HCT116 (cell line): ENCODE measurements at regions of chr20 and their contacts with region 1.

Region 1: DNA sequence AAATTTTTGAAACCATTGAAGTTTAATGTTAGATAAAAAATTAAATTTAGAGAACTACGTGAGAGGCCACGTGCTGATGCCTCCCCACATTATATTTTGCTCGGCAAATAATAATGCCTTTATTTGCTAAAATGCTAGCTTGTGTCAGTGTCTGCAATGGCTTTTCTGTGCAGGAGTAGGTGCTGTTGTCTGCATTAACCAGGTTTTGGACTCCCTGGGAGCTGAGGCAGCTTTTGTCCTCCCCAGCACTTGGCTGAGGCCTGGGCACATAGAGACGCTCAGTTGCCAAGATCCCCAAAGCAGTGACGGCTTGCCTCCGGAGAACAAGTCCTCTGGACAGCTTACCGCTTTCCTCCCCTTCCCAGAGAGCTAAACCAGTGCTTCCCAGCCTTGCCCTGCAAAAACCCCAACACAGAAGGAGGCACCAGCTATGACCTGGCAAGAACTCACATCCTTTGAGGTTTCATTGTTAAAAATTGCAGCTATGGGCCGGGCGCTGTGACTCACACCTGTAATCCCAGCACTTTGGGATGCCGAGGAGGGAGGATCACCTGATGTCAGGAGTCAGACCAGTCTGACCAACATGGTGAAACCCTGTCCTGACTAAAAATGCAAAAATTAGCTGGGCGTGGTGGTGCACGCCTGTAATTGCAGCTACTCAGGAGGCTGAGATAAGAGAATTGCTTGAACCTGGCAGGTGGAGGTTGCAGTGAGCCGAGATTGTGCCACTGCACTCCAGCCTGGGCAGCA is 59.9 kb downstream of the KAT14 start:
- DNase-seq: peak; percentile 71
- ATAC-seq: peak; percentile 93
- H3K4me3 ChIP-seq: peak overlapping the region in 1 of 2 experiments; percentile 16; a peak in 2 of 4 replicates
- H3K27ac ChIP-seq: peak overlapping the region; percentile 51
- H3K4me1 ChIP-seq: peaks cover 12 to 22% of the 10 kb centered on the region in 2 experiments
- H3K27me3 ChIP-seq: no peaks in the 10 kb centered on the region
- CTCF ChIP-seq: peak in 2 of 3 experiments; percentile 51 to 57; a peak in 4 of 6 replicates
- POLR2A ChIP-seq: no peak
- RAD21 ChIP-seq: peak; percentile 52

Region 2: DNA sequence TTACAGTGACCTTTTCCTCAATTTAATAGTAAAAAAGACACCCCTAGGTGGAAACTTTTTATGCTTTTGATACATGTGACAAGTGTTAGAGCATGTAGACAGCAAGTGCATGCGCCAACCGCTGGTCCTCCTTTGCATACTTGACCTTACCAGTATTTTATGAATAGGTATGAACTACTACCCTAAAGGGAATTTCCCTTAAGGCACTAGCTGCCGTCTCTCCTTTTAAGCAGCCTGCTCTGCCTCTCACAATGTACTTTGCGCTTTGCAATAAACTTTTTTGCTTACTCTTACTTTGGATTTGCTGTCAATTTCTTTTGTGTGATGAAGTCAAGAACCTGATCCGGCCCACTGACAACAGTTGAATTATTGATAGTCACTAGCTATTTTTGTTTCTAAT is 40.1 kb after region 1 on chr20:
- CTCF ChIA-PET with region 1: no interaction called
- POLR2A ChIA-PET with region 1: no interaction called
- RAD21 ChIA-PET with region 1: no interaction called
- intact Hi-C with region 1: loop called (anchors 1 kb)
- DNase-seq: no peak
- ATAC-seq: no peak
- H3K4me3 ChIP-seq: no peak overlapping the region
- H3K27ac ChIP-seq: no peak overlapping the region
- H3K4me1 ChIP-seq: no peaks in the 10 kb centered on the region
- H3K27me3 ChIP-seq: no peaks in the 10 kb centered on the region
- CTCF ChIP-seq: no peak
- POLR2A ChIP-seq: no peak
- RAD21 ChIP-seq: no peak

Region 3: DNA sequence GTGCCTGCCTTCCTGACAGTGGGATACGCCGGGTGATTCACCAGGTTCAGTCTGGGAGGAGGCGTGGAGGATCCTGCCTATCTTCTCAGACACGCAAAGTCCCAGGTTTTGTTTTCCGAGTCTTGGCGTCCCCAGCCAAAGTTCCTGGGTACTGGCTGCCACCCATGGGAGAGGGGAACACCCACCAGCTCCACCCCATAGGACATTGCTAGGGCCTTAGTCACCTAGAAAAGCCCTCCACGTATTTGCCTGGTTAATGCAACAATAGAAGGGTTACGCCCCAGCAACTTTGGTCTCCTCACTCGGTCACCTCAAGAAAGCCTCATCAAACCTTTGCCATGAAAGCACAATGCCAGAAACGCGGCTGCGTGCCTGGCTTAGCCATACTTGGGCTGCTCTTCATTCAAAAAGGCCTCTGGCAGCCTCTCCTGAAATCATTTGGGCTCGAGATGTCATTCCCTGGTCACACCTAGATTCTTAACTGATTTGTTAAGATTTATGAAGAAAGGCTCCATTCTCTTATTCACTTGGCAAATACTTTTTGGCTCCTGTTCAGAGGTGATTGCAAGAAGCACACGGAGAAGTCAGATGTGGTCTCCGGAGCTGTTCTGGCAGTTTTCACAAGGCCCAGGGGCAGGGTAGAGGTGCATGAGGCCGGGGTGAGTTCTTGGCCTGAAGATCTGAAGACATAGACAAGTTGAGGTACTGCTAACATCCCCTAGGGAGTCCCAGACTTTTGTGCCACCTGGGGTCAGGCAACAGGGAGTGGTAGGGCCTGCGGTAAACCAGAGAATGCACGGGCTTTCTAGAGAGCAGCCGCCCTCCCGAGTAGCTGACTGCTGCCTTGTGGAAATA is 55.3 kb after region 1 on chr20:
- CTCF ChIA-PET with region 1: no interaction called
- POLR2A ChIA-PET with region 1: no interaction called
- RAD21 ChIA-PET with region 1: no interaction called
- intact Hi-C with region 1: loop called (anchors 2 kb)
- DNase-seq: peak; percentile 73
- ATAC-seq: peak; percentile 90
- H3K4me3 ChIP-seq: peak overlapping the region; percentile 22 to 54
- H3K27ac ChIP-seq: peak overlapping the region; percentile 56
- H3K4me1 ChIP-seq: peaks cover 13 to 27% of the 10 kb centered on the region in 2 experiments
- H3K27me3 ChIP-seq: no peaks in the 10 kb centered on the region
- CTCF ChIP-seq: no peak
- POLR2A ChIP-seq: no peak
- RAD21 ChIP-seq: no peak; the same call in 1 of the 2 replicates